ENCODE measurements at regions of chr4 and their contacts with region 1.

Region 1: GRCh38 chr4:124111922-124112321 is 600.6 kb downstream of the ANKRD50 start:
- DNase-seq: peak; percentile 84
- H3K4me3 ChIP-seq: no peak overlapping the region
- H3K27ac ChIP-seq: peak overlapping the region; percentile 5
- H3K4me1 ChIP-seq: peaks cover 9% of the 10 kb centered on the region
- H3K27me3 ChIP-seq: no peaks in the 10 kb centered on the region
- CTCF ChIP-seq: peak; percentile 42 to 49
- POLR2A ChIP-seq: no peak

Region 2: DNA sequence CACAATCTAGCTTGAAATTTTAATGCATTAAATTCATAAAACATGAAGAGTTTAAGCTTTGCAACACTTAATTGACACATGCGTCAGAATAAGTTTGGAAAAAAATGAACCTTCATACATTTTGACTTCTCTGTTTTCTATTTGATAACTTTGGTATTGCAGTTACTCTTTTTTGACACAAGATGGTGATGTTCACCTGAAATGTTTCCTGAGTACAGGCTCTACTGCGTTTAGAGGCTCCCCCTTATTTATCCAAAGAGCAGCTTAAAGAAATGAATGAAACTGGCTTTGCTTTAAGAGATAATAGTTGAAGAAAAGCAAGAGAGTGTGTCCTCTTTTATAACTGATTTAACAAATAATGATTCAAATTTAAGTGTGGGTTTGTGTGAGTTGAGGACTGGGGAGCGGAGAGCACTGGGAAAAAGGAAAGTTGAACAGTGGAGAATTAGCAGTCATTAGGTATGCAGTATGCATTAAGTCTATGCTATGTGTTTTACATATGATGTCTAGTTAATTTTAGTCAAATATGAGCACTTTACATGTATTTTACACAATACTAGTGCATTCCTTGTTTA is 1008.9 kb before region 1 on chr4:
- CTCF ChIA-PET with region 1: interaction called, 7 read pairs
- POLR2A ChIA-PET with region 1: no interaction called
- dilution Hi-C with region 1: no loop called
- intact Hi-C with region 1: loop called (anchors 1 kb)
- DNase-seq: peak; percentile 52
- H3K4me3 ChIP-seq: no peak overlapping the region
- H3K27ac ChIP-seq: no peak overlapping the region
- H3K4me1 ChIP-seq: no peaks in the 10 kb centered on the region
- H3K27me3 ChIP-seq: no peaks in the 10 kb centered on the region
- CTCF ChIP-seq: peak; percentile 37 to 44
- POLR2A ChIP-seq: no peak

Region 3: GRCh38 chr4:123564758-123565346 is 547.1 kb before region 1 on chr4:
- CTCF ChIA-PET with region 1: interaction called, 9 read pairs
- POLR2A ChIA-PET with region 1: no interaction called
- dilution Hi-C with region 1: no loop called
- intact Hi-C with region 1: loop called (anchors 1 kb)
- DNase-seq: peak; percentile 74
- H3K4me3 ChIP-seq: no peak overlapping the region
- H3K27ac ChIP-seq: no peak overlapping the region
- H3K4me1 ChIP-seq: peaks cover 5% of the 10 kb centered on the region
- H3K27me3 ChIP-seq: peaks cover 2 to 5% of the 10 kb centered on the region in 2 experiments
- CTCF ChIP-seq: peak; percentile 81 to 84
- POLR2A ChIP-seq: no peak

Region 4: DNA sequence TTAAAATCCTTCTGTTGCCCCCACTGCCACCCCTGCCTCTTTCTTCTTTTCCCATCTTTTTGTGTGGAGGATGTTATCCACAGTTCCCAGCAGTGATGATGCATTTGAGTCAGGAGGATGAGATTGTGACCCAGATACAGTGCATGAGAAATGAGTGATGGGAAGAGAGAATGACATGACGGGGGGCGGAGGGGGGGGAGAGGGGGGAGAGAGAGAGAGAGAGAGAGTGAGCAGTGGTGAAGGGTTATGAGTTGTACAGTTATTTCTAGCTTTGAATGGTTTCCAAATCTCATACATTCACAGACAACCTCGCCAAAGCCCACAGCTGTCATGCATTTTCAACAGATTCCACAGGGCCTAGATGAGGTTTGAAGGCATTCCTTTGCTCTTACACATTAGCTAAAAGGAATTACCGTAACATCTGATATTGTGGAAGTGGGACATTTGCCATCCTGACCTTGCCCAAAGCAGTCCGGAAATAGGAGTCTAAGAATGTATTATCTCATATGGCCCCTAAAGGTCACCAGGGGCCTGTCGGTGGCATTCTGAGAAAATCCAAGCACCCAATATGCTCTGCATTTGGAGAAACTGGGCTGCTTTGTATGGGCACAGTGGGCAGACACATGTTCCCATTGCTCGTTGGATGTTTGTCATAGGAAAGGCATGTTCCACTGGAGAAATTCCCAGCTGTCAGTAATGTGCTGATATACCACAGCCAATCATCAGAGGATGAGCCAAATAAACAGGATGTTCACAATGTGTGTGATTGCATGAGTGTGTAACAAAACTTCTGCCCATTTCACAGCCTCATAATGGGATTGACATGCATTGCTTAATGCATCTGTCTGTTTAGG is 279.5 kb before region 1 on chr4:
- CTCF ChIA-PET with region 1: interaction called, 3 read pairs
- POLR2A ChIA-PET with region 1: no interaction called
- dilution Hi-C with region 1: no loop called
- intact Hi-C with region 1: loop called (anchors 1 kb)
- DNase-seq: peak; percentile 86
- H3K4me3 ChIP-seq: no peak overlapping the region
- H3K27ac ChIP-seq: peak overlapping the region; percentile 93
- H3K4me1 ChIP-seq: peaks cover 38% of the 10 kb centered on the region
- H3K27me3 ChIP-seq: no peaks in the 10 kb centered on the region
- CTCF ChIP-seq: no peak
- POLR2A ChIP-seq: peak; percentile 24

Region 5: DNA sequence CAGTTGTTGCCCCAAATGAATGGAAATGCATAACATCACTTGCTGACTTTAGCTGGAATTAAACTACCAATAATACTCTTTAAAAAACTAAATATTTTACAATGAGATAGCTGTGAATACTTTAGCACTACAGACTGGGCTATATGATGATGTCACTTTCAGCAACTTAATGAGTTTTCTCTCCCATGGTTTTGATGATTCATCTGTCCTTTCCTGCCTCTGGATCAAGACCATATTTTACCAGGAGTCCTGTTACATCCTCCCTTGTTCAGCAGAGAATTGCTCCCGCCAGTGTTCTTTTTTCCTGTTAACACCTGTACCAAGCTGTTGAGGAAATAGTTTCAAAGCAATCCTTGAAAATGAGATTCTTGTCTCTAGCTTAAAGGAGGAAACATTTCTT is 172.3 kb before region 1 on chr4:
- CTCF ChIA-PET with region 1: no interaction called
- POLR2A ChIA-PET with region 1: no interaction called
- dilution Hi-C with region 1: no loop called
- intact Hi-C with region 1: loop called (anchors 1 kb)
- DNase-seq: peak; percentile 86
- H3K4me3 ChIP-seq: no peak overlapping the region
- H3K27ac ChIP-seq: peak overlapping the region; percentile 79
- H3K4me1 ChIP-seq: peaks cover 35% of the 10 kb centered on the region
- H3K27me3 ChIP-seq: no peaks in the 10 kb centered on the region
- CTCF ChIP-seq: no peak
- POLR2A ChIP-seq: no peak

Region 6: DNA sequence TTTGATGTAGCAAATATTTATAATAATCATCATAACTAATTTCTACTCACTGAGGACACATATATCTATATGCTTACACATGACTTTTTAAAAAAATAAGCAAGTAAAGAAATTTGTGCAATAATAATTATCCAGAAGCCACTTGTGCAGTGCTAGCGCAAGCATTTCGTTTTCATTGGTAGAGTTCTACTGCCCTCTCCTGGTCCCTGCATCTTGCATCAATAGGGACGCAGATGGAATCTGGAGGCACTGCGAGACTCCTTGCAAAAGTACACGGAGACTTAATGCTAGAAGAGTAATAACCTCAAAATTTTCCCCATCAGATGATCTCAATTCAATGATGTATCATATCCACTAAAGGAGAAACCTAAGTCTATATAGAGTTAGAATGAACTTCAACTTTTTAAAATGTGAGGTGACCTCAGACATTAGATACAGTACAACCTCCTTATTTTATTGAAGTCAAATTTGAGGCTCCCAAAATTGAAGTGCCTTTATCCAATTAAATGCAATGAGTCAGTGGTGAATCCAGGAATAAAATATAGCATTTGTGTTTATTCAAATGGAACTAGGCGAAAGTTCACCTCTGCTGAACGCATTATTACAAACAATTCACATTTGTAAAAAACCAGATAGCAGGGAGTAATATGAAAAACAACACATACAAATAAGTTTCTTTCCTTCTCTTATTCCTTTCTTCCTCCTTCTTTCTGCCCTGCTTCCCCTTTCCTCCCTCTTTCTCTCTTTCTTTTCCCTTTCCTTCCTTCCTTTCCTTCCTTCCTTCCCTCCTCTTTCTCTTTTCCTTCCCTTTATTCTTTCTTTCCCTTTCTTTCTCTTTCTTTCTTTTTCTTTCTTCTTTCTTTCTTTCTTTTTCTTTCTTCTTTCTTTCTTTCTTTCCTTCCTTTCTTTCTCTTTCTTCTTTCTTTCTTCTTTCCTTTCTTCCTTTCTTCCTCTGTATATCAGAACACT is 150.6 kb after region 1 on chr4:
- CTCF ChIA-PET with region 1: interaction called, 12 read pairs
- POLR2A ChIA-PET with region 1: no interaction called
- dilution Hi-C with region 1: no loop called
- intact Hi-C with region 1: loop called (anchors 1 kb)
- DNase-seq: peak; percentile 86
- H3K4me3 ChIP-seq: no peak overlapping the region
- H3K27ac ChIP-seq: no peak overlapping the region
- H3K4me1 ChIP-seq: no peaks in the 10 kb centered on the region
- H3K27me3 ChIP-seq: no peaks in the 10 kb centered on the region
- CTCF ChIP-seq: peak; percentile 70 to 87
- POLR2A ChIP-seq: no peak

Region 7: GRCh38 chr4:125283707-125284279 is 1171.9 kb after region 1 on chr4:
- CTCF ChIA-PET with region 1: interaction called, 10 read pairs
- POLR2A ChIA-PET with region 1: no interaction called
- dilution Hi-C with region 1: no loop called
- intact Hi-C with region 1: no loop called
- DNase-seq: peak; percentile 54
- H3K4me3 ChIP-seq: no peak overlapping the region
- H3K27ac ChIP-seq: no peak overlapping the region
- H3K4me1 ChIP-seq: peaks cover 4% of the 10 kb centered on the region
- H3K27me3 ChIP-seq: no peaks in the 10 kb centered on the region
- CTCF ChIP-seq: peak; percentile 8 to 26
- POLR2A ChIP-seq: no peak

Measured in endothelial cell of umbilical vein (primary cell).